ENCODE measurements at regions of chr17 and their contacts with region 1.

Region 1: DNA sequence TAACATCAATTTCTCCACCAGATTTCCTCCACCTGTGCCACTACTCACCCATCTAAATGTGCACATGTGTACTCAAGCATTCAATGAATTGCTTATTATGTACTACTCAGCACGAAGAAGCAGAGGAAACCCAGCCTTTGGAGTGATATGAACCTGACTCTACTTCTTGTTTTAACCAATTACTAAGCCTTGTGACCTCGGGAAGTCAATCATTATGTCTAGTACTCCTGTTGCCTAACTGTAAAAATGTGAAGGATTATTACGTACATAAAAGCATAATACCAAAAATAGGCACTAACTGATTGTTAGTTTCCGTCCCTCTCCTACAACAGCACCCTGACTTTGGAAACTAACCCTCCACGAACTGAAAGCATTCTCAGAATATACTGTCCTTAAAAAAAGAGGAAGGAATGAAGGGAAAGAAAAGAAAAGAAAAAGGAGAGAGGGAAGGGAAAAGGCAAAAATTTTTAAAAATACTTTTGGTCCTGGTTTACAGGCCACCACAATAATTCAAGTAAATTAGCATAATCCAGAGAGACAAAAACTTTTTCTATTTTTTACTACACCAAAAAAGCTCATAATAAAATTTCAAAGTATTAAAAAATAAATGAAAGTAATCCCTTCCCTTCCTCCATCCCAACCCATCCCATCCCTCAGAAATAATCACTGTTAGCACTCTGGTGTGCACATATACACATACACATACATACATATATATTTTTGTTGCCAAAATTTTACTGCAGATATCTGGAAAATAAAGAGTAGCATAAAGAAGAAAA is 53.6 kb downstream of the KANSL1 start:
- DNase-seq: no peak
- H3K4me3 ChIP-seq: no peak overlapping the region
- H3K27ac ChIP-seq: no peak overlapping the region
- H3K4me1 ChIP-seq: peaks cover 5% of the 10 kb centered on the region
- H3K27me3 ChIP-seq: no peaks in the 10 kb centered on the region
- CTCF ChIP-seq: no peak

Region 2: DNA sequence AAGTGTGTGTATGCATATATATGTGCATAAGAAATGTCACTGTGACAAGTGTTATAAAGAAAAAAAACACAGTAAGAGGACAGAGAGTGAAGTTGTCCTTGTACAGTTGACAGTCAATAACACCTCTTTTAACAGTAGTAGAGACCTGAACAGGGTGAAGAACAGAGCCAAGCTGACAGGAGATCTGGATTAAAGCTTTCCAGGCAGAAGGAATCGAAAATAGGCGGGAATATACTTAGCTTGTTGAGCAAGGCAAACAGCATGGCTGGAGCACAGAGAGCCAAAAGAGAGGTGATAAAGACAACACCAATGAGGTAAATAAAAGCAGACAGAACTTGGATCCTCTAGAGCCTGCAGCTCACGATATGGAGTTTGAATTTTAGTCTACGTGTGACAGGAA is 11.2 kb before region 1 on chr17:
- CTCF ChIA-PET with region 1: no interaction called
- dilution Hi-C with region 1: no loop called
- in situ Hi-C with region 1: no loop called
- intact Hi-C with region 1: loop called (anchors 2 kb)
- DNase-seq: no peak
- H3K4me3 ChIP-seq: no peak overlapping the region
- H3K27ac ChIP-seq: no peak overlapping the region
- H3K4me1 ChIP-seq: no peaks in the 10 kb centered on the region
- H3K27me3 ChIP-seq: no peaks in the 10 kb centered on the region
- CTCF ChIP-seq: no peak